ENCODE measurements at regions of chr1 and their contacts with region 1.

Region 1: GRCh38 chr1:95233737-95234500 is at the start of gene RWDD3:
- DNase-seq: peak; percentile 70 to 96
- H3K4me3 ChIP-seq: peak within 1 kb of the TSS; percentile 68 to 85
- H3K27ac ChIP-seq: peak within 1 kb of the TSS; percentile 86 to 93
- H3K4me1 ChIP-seq: peaks cover 0 to 8% of the 10 kb centered on the region in 2 donors
- H3K27me3 ChIP-seq: no peaks in the 10 kb centered on the region
- CTCF ChIP-seq: peak; percentile 52 to 90 (median 79)
- total RNA-seq, gene RWDD3: not detected

Region 2: DNA sequence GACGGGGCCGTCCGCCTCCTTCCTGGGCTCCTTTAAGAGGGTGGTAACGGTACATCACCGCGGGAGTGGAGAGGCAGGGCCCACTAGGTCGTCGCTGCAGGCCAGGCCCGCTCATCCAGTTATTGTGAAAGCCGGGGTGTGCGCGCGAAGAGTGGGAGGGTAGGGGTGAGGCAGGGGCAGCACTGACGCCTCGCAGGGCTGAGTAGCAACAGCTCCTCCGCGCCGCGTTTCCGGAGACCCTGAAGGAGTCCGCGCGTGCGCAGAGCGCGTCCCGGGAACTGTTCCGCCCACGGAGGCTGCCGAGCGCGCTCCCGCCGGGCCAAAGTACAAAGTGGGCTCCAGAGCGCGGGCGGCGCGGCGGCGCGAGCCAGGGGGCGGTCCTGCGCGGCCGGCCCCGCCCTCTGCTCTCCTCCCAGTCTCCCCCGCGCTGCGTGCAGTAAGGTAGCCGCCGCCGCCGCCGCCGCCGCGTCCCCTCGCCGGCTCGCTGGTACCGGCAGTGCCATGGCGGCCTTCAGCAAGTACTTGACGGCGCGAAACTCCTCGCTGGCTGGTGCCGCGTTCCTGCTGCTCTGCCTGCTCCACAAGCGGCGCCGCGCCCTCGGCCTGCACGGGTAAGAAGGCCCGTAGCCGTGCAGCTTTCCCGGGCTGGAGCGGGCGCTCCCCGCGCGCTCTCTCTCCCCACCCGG is 815.8 kb before region 1 on chr1 and contains the start of gene ABCD3:
- intact Hi-C with region 1: loop called (anchors 10 kb)
- DNase-seq: peak; percentile 90 to 99
- H3K4me3 ChIP-seq: peak within 1 kb of the TSS; percentile 86 to 94
- H3K27ac ChIP-seq: peak within 1 kb of the TSS; percentile 86 to 90
- H3K4me1 ChIP-seq: peaks cover 0 to 11% of the 10 kb centered on the region in 2 donors
- H3K27me3 ChIP-seq: no peaks in the 10 kb centered on the region
- CTCF ChIP-seq: no peak
- total RNA-seq, gene ABCD3: 8.8 TPM

Region 3: DNA sequence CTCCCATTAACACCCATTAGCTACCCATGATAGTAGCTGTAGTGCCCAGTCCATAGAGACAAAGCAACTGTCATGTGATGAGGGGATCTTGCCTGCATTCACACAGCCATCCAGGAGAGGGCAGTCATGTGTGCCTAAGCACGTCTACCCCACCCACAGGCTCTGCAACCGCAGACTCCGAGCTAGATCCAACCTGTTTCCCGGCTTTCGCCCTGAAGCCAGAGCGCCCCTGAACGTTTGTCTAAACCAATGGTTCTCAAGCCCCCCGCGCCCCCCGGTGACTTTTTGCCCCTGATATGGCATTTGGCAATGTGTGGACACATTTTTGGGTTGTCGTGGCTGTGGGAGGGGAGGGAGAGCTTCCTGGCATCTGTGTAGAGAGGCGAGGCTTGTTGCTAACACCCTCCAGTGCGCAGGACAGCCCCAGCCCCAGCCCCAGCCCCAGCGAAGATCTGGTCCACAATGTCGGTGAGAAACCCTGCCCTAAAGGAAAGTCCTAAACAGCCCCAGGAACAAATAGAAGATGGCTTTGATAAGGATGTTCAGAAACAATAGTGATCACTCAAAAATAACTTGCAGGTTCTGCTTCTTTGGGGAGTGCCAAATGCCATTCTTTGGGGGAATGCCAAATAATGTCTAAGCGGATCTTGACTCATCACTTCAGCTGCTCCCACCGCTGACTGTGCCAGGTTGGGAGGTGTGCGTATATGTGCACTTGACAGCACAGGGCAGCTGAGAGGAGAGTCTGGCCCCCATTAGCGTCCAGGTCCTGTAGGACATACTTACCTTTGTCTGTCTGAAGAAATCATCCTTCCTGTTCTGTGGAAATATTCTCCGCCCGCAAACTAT is 379.2 kb before region 1 on chr1:
- intact Hi-C with region 1: loop called (anchors 5 kb)
- DNase-seq: peak; percentile 67 to 96
- H3K4me3 ChIP-seq: peak overlapping the region; percentile 46 to 61
- H3K27ac ChIP-seq: peak overlapping the region; percentile 68 to 73
- H3K4me1 ChIP-seq: peaks cover 0 to 16% of the 10 kb centered on the region in 2 donors
- H3K27me3 ChIP-seq: no peaks in the 10 kb centered on the region
- CTCF ChIP-seq: peak; percentile 93

Region 4: GRCh38 chr1:95072532-95073419 is 161.1 kb before region 1 on chr1 and contains the start of gene ALG14:
- intact Hi-C with region 1: loop called (anchors 1 kb)
- DNase-seq: peak; percentile 72 to 96
- H3K4me3 ChIP-seq: peak within 1 kb of the TSS; percentile 67 to 71
- H3K27ac ChIP-seq: peak within 1 kb of the TSS; percentile 88 to 89
- H3K4me1 ChIP-seq: peaks cover 0 to 3% of the 10 kb centered on the region in 2 donors
- H3K27me3 ChIP-seq: no peaks in the 10 kb centered on the region
- CTCF ChIP-seq: no peak
- total RNA-seq, gene ALG14: not detected

Region 5: DNA sequence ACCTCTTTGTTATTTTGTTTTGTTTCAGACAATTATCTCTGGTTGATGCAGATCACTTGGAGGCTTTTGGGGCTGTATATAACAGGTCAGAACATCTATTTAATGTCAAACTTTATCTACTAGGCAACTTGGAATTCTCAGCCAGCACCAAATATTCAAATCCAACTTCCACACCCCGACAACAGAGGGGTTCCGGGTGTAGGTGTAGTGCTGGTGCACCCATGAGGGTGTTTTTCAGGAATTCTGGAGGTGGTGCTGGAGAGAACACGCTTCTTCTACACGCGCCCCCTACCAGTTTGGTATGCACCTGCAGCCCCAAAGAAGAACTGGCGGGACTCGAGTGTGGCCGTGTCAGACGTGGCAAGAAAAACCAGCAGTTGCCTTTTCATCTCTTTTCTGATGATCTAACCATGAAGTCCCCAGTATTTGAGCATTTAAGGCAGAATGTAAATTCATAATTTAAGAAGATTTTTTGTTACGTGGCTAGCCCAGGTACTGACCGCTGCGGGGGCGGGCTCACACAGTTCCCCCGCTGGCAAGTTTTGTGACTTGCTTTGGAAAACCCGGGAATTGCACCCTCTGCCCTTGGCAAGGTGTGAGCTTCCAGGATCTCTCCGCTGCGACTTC is 117.2 kb before region 1 on chr1:
- intact Hi-C with region 1: loop called (anchors 1 kb)
- DNase-seq: peak in 1 of 2 donors; percentile 79
- H3K4me3 ChIP-seq: peak overlapping the region; percentile 85 to 88
- H3K27ac ChIP-seq: peak overlapping the region; percentile 77 to 85
- H3K4me1 ChIP-seq: peaks cover 0 to 4% of the 10 kb centered on the region in 2 donors
- H3K27me3 ChIP-seq: no peaks in the 10 kb centered on the region
- CTCF ChIP-seq: peak; percentile 60 to 71 (median 61)

Region 6: GRCh38 chr1:95278173-95279006 is 44.5 kb after region 1 on chr1:
- intact Hi-C with region 1: no loop called
- DNase-seq: no peak
- H3K4me3 ChIP-seq: no peak overlapping the region
- H3K27ac ChIP-seq: no peak overlapping the region
- H3K4me1 ChIP-seq: no peaks in the 10 kb centered on the region
- H3K27me3 ChIP-seq: no peaks in the 10 kb centered on the region
- CTCF ChIP-seq: no peak

Measured in ascending aorta (tissue), 2 donors.